Tibial artery (tissue), 4 donors: ENCODE measurements at regions of chr2 and their contacts with region 1.

Region 1: DNA sequence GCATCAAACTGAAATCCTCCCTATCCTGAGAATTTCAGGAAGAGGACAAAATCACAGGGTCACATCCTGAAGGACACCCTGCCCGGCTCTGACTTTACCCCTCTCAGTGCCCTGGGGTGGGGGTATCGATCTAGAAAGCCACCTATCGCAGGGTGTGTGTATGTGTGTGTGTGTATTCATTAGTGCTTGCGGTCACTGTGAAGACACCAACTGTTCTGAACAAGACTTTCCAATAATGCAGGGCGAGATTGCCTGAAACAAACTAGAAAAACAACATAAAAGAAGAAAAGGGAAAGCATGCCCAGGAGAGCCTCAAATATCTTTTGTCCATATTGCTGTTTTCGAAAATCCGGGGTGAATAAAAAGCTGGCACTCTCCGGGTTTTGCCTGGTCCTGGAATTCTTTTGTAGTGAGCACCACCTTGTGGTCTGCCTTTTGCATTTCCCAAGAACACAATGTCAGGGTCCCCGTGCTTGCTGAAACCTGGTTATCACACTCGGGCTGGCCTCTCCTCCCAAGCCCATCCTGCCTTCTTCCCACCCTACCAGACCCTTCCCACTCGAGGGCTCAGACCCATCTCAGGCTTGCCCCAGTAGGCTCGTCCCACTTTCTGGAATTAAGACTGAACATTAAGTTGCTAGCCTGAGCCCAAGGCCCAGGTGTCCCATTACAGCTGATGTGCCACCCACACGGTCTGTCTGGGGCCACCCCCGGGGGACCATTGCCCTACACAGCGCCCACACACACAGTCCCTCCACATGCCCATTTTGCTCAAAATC is 25.0 kb upstream of the COPS8 start:
- DNase-seq: peak in 1 of 2 donors; percentile 38
- H3K4me3 ChIP-seq: no peak overlapping the region
- H3K27ac ChIP-seq: no peak overlapping the region
- H3K4me1 ChIP-seq: peaks cover 0 to 22% (median 10%) of the 10 kb centered on the region in 4 donors
- H3K27me3 ChIP-seq: no peaks in the 10 kb centered on the region
- CTCF ChIP-seq: peak; percentile 59 to 73

Region 2: DNA sequence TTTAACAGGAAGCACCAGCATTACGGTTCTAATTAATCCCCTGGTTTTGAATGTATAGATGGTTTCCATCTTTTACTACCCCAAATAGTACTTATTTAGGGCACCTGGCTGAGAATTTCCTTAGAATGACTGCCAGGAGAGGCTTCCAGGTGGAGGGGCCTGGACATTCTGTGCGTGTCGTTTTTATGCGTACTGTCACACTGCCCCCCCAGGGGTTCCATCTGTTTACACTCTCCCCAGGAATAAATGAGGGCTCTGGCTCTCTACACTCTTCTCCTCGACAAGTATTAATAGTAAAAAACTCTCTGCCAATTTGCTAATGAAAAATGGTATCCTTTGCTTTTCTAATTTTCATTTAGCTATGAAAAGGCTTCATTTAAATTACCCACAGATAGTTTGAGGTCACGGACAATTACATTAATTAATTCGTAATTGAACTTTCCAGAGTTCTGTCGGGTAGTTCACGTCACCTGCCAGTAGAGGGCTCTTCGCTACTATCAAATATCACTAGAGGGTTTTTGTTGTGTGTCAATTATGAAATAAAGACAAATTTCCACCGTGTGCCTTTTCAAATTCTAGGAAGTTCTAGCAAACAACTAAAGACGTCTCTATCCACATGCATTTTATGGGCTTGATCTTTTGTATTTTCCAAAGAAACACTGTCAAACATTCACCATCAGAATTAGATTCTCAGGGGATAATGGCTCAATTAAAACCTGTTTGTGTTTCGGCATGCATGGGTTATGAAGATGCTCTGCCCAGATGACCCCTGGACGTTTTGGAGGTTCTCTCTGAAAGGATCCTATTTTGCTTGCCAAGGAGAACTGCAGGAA is 707.7 kb before region 1 on chr2:
- intact Hi-C with region 1: loop called (anchors 2 kb)
- DNase-seq: no peak
- H3K4me3 ChIP-seq: no peak overlapping the region
- H3K27ac ChIP-seq: no peak overlapping the region
- H3K4me1 ChIP-seq: no peaks in the 10 kb centered on the region
- H3K27me3 ChIP-seq: peaks cover 0 to 4% of the 10 kb centered on the region in 2 donors
- CTCF ChIP-seq: peak; percentile 89 to 92

Region 3: GRCh38 chr2:236512902-236513435 is 547.8 kb before region 1 on chr2:
- intact Hi-C with region 1: loop called (anchors 5 kb)
- DNase-seq: peak; percentile 66 to 82
- H3K4me3 ChIP-seq: no peak overlapping the region
- H3K27ac ChIP-seq: peak overlapping the region in 1 of 2 donors; percentile 23
- H3K4me1 ChIP-seq: peaks cover 0 to 10% (median 6%) of the 10 kb centered on the region in 4 donors
- H3K27me3 ChIP-seq: no peaks in the 10 kb centered on the region
- CTCF ChIP-seq: peak; percentile 86

Region 4: DNA sequence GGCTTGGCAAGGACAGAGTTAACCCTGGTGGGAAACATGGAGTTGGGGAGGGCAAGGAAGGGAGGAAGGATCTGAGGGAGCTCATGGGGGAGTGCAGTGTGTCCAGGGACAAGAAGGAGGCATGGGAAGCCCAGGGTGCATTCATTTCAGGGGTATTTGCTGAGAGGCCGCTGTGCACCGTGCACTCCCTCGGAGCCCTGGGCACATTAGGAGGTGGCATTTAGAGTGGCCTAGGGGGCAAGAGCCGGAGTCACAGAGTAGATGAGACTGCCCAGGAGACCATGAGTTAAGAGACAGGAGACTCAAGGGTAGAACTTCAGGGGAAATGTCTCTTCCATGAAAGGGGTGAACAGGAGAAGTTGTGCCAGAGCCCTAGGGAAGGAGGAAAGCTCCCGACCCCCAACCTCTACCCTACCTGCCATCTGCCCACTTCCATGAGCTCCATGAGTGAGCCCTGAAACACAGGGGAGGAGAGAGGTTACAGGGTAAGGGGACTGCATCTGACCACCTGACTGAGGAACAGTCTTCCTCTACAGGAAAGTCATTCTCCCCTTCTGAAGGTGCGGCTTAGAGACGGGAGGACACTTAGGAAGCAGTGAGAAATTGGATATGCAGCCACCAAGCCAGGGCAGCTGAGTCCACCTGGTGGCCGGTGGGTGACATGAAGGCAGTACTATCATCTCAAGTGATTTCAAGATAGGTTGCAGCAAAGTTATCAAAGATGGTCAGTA is 33.6 kb before region 1 on chr2:
- intact Hi-C with region 1: loop called (anchors 1 kb)
- DNase-seq: peak; percentile 80 to 87
- H3K4me3 ChIP-seq: no peak overlapping the region
- H3K27ac ChIP-seq: no peak overlapping the region
- H3K4me1 ChIP-seq: peaks cover 0 to 4% (median 0%) of the 10 kb centered on the region in 4 donors
- H3K27me3 ChIP-seq: no peaks in the 10 kb centered on the region
- CTCF ChIP-seq: peak; percentile 85 to 90

Region 5: DNA sequence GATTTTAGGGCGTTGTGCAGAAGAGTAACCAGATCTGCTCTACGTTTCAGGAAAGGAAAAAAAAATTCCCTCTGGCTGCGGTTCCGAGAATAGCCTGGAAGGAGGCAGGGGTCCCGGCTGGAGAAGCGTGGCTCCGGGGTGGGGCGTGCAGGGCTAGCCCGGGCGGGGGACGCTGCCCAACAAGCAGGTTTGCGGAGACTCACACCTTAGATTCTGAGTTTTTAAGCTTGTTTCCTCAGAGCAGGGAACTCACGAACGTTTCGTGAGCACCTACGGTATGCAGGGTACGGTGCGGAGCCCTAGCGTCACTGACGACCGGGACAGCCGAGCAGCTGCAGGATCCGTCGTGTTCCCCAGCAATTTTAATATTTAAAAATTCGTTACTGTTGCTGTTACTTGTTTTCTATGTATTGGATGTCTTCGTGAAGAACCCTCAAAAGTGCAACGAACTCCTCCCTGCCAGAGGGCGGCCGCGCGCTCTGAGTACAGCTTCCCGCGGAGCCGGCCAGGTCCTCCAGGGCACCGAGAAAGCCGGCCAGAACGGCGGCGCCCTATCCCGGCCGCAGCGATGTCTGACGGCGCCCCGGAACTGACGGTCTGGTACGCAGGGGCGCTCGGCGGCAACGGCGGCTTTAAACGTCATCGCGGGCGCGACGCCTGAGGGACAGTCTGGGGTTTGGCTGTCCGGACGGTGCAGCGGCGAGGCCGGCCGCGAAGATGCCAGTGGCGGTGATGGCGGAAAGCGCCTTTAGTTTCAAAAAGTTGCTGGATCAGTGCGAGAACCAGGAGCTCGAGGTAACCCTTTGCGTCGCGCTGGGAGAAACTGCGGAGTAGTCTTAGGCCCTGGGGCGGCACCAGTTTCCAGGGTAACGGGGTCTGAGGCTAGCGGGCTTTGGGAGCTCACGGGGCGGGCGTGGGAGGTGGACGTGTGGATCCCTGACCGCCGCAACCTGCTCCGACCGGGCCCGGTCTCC is 24.8 kb after region 1 on chr2 and contains the start of gene COPS8:
- intact Hi-C with region 1: no loop called
- DNase-seq: peak; percentile 94 to 97
- H3K4me3 ChIP-seq: peak within 1 kb of the TSS; percentile 73 to 96
- H3K27ac ChIP-seq: peak within 1 kb of the TSS; percentile 82 to 85
- H3K4me1 ChIP-seq: peaks cover 0 to 30% (median 7%) of the 10 kb centered on the region in 4 donors
- H3K27me3 ChIP-seq: no peaks in the 10 kb centered on the region
- CTCF ChIP-seq: peak in 1 of 2 experiments; percentile 33

Region 6: GRCh38 chr2:237097911-237098702 is 37.4 kb after region 1 on chr2:
- intact Hi-C with region 1: no loop called
- DNase-seq: no peak
- H3K4me3 ChIP-seq: no peak overlapping the region
- H3K27ac ChIP-seq: no peak overlapping the region
- H3K4me1 ChIP-seq: peaks cover 0 to 2% (median under 1%) of the 10 kb centered on the region in 4 donors
- H3K27me3 ChIP-seq: no peaks in the 10 kb centered on the region
- CTCF ChIP-seq: no peak

Region 7: GRCh38 chr2:237154082-237154638 is 93.4 kb after region 1 on chr2:
- intact Hi-C with region 1: no loop called
- DNase-seq: peak in 1 of 2 donors; percentile 68
- H3K4me3 ChIP-seq: no peak overlapping the region
- H3K27ac ChIP-seq: peak overlapping the region in 1 of 2 donors; percentile 87
- H3K4me1 ChIP-seq: peaks cover 0 to 23% (median 15%) of the 10 kb centered on the region in 4 donors
- H3K27me3 ChIP-seq: no peaks in the 10 kb centered on the region
- CTCF ChIP-seq: peak; percentile 59 to 61